Activated CD4-positive, alpha-beta T cell treated with anti-CD3 and anti-CD28 coated beads for 36 hours (primary cell): ENCODE measurements at regions of chr19 and their contacts with region 1.

Region 1: DNA sequence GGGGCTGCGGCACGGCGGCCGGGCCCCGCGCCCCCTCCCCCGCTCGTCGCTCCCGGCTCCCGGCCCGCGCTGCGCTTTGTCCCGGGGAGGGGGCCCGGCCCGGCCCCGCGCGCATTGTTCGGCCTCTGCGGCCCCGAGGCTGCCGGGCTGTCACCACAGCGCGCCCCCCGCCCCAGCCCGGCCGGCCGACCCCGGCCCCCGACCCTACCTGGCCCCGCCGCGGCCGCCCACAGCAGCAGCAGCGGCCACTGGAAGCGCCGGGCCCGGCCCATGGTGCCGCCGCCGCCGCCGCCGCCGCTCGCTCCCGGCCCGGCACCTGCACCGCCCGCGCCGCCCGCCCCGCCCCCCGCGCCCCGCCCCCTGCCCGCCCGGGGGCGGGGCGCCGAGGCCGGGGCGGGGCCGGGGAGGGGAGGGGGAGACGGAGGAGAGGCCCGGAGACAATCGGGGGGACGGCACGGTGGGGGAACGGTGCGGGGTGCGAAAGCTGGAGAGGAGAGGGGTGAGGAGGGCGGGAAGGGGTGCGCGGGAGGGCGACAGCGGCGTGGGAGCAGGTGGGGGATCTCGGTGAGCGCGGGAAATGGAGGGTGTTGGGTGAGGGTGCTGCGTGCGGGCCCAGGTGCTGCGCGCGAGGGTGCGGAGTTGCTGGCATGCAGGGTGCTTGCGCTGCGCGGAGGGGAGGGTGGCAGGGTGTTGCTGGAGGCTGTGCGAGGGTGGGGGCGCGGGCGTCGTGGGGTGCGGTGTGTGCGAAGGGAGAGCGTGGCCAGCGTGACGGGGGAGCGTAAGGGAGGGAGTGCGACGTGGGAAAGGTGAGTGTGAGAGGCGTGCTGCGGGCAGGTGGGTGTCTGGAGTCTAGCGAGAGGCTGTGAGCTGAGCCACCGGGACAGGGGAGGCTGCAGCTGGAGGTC is at the start of gene CADM4:
- DNase-seq: peak; percentile 65
- ATAC-seq: peak; percentile 81
- H3K4me3 Mint-ChIP-seq: peak within 1 kb of the TSS; percentile 65
- H3K27ac Mint-ChIP-seq: no peak within 1 kb of the TSS
- H3K4me1 Mint-ChIP-seq: peaks cover 14% of the 10 kb centered on the region
- H3K27me3 Mint-ChIP-seq: peaks cover 26% of the 10 kb centered on the region
- total RNA-seq, gene CADM4: 0.53 to 0.61 TPM

Region 2: GRCh38 chr19:43619262-43620060 is 20.3 kb before region 1 on chr19 and contains the start of gene ZNF428:
- CTCF ChIA-PET with region 1: no interaction called
- POLR2A ChIA-PET with region 1: no interaction called
- intact Hi-C with region 1: loop called (anchors 1 to 2 kb)
- DNase-seq: peak; percentile 94
- ATAC-seq: peak; percentile 92
- H3K4me3 Mint-ChIP-seq: peak within 1 kb of the TSS; percentile 94
- H3K27ac Mint-ChIP-seq: peak within 1 kb of the TSS; percentile 99
- H3K4me1 Mint-ChIP-seq: peaks cover 17% of the 10 kb centered on the region
- H3K27me3 Mint-ChIP-seq: no peaks in the 10 kb centered on the region
- total RNA-seq, gene ZNF428: 9.0 to 10.1 TPM

Region 3: DNA sequence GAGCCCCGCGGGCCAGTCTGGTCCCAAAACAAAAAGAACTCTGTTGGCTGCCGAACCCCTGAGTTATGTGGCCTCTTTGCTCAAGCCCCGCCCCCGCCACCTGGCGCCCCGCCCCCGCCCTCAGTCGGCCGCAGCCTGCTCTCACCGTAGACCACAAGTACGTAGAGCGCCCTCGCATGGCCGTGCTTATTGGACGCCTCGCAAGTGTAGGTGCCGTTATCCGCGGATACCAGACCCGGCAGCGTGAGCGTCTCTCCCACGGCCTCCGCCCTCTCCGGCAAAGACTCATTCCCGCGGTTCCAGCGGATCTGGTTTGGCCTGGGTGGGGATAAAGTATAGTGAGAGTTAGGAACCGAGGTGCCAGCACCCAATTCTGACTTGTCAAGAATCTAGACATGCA is 14.8 kb before region 1 on chr19:
- CTCF ChIA-PET with region 1: interaction called, 5 read pairs
- POLR2A ChIA-PET with region 1: no interaction called
- intact Hi-C with region 1: loop called (anchors 1 to 2 kb)
- DNase-seq: peak; percentile 96
- ATAC-seq: peak; percentile 90
- H3K4me3 Mint-ChIP-seq: no peak overlapping the region
- H3K27ac Mint-ChIP-seq: no peak overlapping the region
- H3K4me1 Mint-ChIP-seq: peaks cover 23% of the 10 kb centered on the region
- H3K27me3 Mint-ChIP-seq: peaks cover 6% of the 10 kb centered on the region